ENCODE measurements at regions of chr16 and their contacts with region 1.

Region 1: GRCh38 chr16:30692381-30693064 is 6.4 kb upstream of the SRCAP start:
- DNase-seq: no peak
- ATAC-seq: no peak
- H3K4me3 ChIP-seq: no peak overlapping the region
- H3K4me3 Mint-ChIP-seq: no peak overlapping the region
- H3K27ac ChIP-seq: no peak overlapping the region
- H3K27ac Mint-ChIP-seq: peak overlapping the region; percentile 13
- H3K4me1 ChIP-seq: peaks cover 8 to 10% of the 10 kb centered on the region in 2 donors
- H3K4me1 Mint-ChIP-seq: peaks cover 10% of the 10 kb centered on the region
- H3K27me3 ChIP-seq: no peaks in the 10 kb centered on the region
- H3K27me3 Mint-ChIP-seq: no peaks in the 10 kb centered on the region
- CTCF ChIP-seq: no peak

Region 2: GRCh38 chr16:30472328-30472942 is 220.1 kb before region 1 on chr16 and contains the start of gene ITGAL:
- CTCF ChIA-PET with region 1: no interaction called
- POLR2A ChIA-PET with region 1: no interaction called
- intact Hi-C with region 1: no loop called
- DNase-seq: peak; percentile 83
- ATAC-seq: peak; percentile 69
- H3K4me3 ChIP-seq: peak within 1 kb of the TSS; percentile 39 to 76 (median 59)
- H3K4me3 Mint-ChIP-seq: peak within 1 kb of the TSS; percentile 83
- H3K27ac ChIP-seq: peak within 1 kb of the TSS; percentile 70 to 82
- H3K27ac Mint-ChIP-seq: peak within 1 kb of the TSS; percentile 91
- H3K4me1 ChIP-seq: peaks cover 42 to 48% of the 10 kb centered on the region in 2 donors
- H3K4me1 Mint-ChIP-seq: peaks cover 47% of the 10 kb centered on the region
- H3K27me3 ChIP-seq: no peaks in the 10 kb centered on the region
- H3K27me3 Mint-ChIP-seq: no peaks in the 10 kb centered on the region
- CTCF ChIP-seq: no peak
- total RNA-seq, gene ITGAL: 176 and 184 TPM in 2 replicates

Region 3: GRCh38 chr16:30650369-30651123 is 42.0 kb before region 1 on chr16 and contains the start of gene PRR14:
- CTCF ChIA-PET with region 1: interaction called, 17 read pairs
- POLR2A ChIA-PET with region 1: interaction called, 8 read pairs
- intact Hi-C with region 1: loop called (anchors 1 kb)
- DNase-seq: peak; percentile 99
- ATAC-seq: peak; percentile 76
- H3K4me3 ChIP-seq: peak within 1 kb of the TSS; percentile 62 to 100 (median 93)
- H3K4me3 Mint-ChIP-seq: peak within 1 kb of the TSS; percentile 91
- H3K27ac ChIP-seq: peak within 1 kb of the TSS; percentile 97 to 98
- H3K27ac Mint-ChIP-seq: peak within 1 kb of the TSS; percentile 96
- H3K4me1 ChIP-seq: peaks cover 9 to 21% of the 10 kb centered on the region in 2 donors
- H3K4me1 Mint-ChIP-seq: peaks cover 19% of the 10 kb centered on the region
- H3K27me3 ChIP-seq: no peaks in the 10 kb centered on the region
- H3K27me3 Mint-ChIP-seq: no peaks in the 10 kb centered on the region
- CTCF ChIP-seq: no peak
- total RNA-seq, gene PRR14: 92.7 and 95.8 TPM in 2 replicates

Region 4: DNA sequence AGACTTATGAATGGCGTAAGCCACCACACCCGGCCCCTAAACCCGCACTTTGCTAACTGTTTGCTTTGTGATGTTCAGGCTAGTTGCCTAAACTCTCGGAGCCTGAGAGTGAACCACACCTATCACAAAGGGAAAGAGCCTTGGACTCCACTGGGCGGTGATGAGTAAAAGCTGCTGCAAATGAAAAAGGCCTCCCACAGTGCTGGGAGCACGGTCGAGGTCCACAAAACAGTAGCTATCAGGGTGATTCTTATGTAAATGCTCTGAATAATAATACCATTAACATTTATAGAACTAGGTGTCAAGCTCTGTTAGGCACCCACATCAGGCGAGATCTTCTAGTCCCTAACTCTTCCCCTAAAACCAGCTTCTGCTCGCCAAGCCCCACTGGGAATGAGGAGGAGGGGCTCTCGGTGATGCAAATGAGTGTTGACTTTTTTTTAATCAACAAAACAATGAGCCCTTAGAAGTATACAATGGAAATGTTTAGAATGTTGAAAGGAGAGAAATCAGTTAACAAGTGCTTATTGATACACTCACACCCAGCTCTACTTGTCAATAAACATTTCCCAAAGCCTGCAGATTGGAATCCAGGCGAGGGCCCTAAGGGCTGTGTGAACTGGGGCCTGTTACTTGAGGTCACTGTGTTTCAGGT is 14.5 kb before region 1 on chr16:
- CTCF ChIA-PET with region 1: interaction called, 12 read pairs
- POLR2A ChIA-PET with region 1: interaction called, 3 read pairs
- intact Hi-C with region 1: no loop called
- DNase-seq: no peak
- ATAC-seq: no peak
- H3K4me3 ChIP-seq: no peak overlapping the region
- H3K4me3 Mint-ChIP-seq: no peak overlapping the region
- H3K27ac ChIP-seq: no peak overlapping the region
- H3K27ac Mint-ChIP-seq: no peak overlapping the region
- H3K4me1 ChIP-seq: no peaks in the 10 kb centered on the region
- H3K4me1 Mint-ChIP-seq: no peaks in the 10 kb centered on the region
- H3K27me3 ChIP-seq: no peaks in the 10 kb centered on the region
- H3K27me3 Mint-ChIP-seq: no peaks in the 10 kb centered on the region
- CTCF ChIP-seq: no peak